ENCODE measurements at regions of chr7 and their contacts with region 1.

Region 1: DNA sequence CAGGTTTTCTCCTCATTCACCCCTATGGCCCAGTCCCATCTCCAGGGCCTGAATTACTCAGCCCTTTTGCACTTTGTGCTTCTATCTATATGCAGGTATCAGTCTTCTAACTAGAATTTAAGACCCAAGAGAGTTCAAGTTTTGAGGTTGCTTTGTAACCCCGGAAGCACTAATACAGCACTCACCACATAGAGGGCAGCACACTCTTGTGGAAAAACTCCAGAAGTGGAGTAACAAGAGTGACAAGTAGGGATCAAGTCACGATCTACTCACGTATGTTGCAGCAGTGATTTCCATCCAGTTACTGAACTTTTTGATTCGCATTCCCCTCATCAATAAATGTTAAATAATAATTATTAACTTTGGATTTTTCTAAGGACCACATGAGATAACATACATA is 151.0 kb downstream of the CHCHD3 start:
- DNase-seq: peak; percentile 36 to 44 (median 37)
- ATAC-seq: peak; percentile 81
- H3K4me3 ChIP-seq: no peak overlapping the region
- H3K27ac ChIP-seq: no peak overlapping the region
- H3K4me1 ChIP-seq: no peaks in the 10 kb centered on the region
- H3K27me3 ChIP-seq: no peaks in the 10 kb centered on the region
- CTCF ChIP-seq: peak; percentile 56 to 67 (median 57)
- EP300 ChIP-seq: no peak
- POLR2A ChIP-seq: no peak
- RAD21 ChIP-seq: peak in 1 of 2 experiments; percentile 62; a peak in 3 of 4 replicates

Region 2: GRCh38 chr7:133207687-133208086 is 276.8 kb after region 1 on chr7:
- CTCF ChIA-PET with region 1: no interaction called
- POLR2A ChIA-PET with region 1: no interaction called
- in situ Hi-C with region 1: no loop called
- intact Hi-C with region 1: loop called (anchors 10 kb)
- DNase-seq: peak; percentile 40 to 60 (median 47)
- ATAC-seq: peak; percentile 92
- H3K4me3 ChIP-seq: no peak overlapping the region
- H3K27ac ChIP-seq: no peak overlapping the region
- H3K4me1 ChIP-seq: no peaks in the 10 kb centered on the region
- H3K27me3 ChIP-seq: peaks cover 0 to 19% of the 10 kb centered on the region in 2 experiments; a peak in 3 of 5 replicates
- CTCF ChIP-seq: peak; percentile 54 to 66 (median 63); a peak in 5 of 6 replicates
- EP300 ChIP-seq: no peak
- POLR2A ChIP-seq: no peak
- RAD21 ChIP-seq: peak in 1 of 2 experiments; percentile 66; a peak in 3 of 4 replicates

Measured in K562 (cell line).